ENCODE measurements at regions of chr21 and their contacts with region 1.

Region 1: GRCh38 chr21:23740463-23740862 is 1866.8 kb downstream of the MRPL39 start:
- DNase-seq: no peak
- H3K4me3 ChIP-seq: no peak overlapping the region
- H3K27ac ChIP-seq: no peak overlapping the region
- H3K4me1 ChIP-seq: no peaks in the 10 kb centered on the region
- H3K27me3 ChIP-seq: no peaks in the 10 kb centered on the region
- CTCF ChIP-seq: peak in 2 of 3 experiments; percentile 17 to 40; a peak in 2 of 4 replicates
- EP300 ChIP-seq: no peak
- POLR2A ChIP-seq: no peak
- RAD21 ChIP-seq: peak; percentile 32 to 39; a peak in 3 of 4 replicates

Region 2: GRCh38 chr21:23612210-23612609 is 128.3 kb before region 1 on chr21:
- CTCF ChIA-PET with region 1: no interaction called
- POLR2A ChIA-PET with region 1: no interaction called
- DNase-seq: no peak
- H3K4me3 ChIP-seq: no peak overlapping the region
- H3K27ac ChIP-seq: no peak overlapping the region
- H3K4me1 ChIP-seq: no peaks in the 10 kb centered on the region
- H3K27me3 ChIP-seq: no peaks in the 10 kb centered on the region
- CTCF ChIP-seq: no peak
- EP300 ChIP-seq: no peak
- POLR2A ChIP-seq: no peak
- RAD21 ChIP-seq: no peak

Region 3: GRCh38 chr21:23694390-23694789 is 46.1 kb before region 1 on chr21:
- CTCF ChIA-PET with region 1: no interaction called
- POLR2A ChIA-PET with region 1: no interaction called
- DNase-seq: no peak
- H3K4me3 ChIP-seq: no peak overlapping the region
- H3K27ac ChIP-seq: no peak overlapping the region
- H3K4me1 ChIP-seq: no peaks in the 10 kb centered on the region
- H3K27me3 ChIP-seq: no peaks in the 10 kb centered on the region
- CTCF ChIP-seq: no peak
- EP300 ChIP-seq: no peak
- POLR2A ChIP-seq: no peak
- RAD21 ChIP-seq: no peak; a peak in 1 of 4 replicates

Region 4: DNA sequence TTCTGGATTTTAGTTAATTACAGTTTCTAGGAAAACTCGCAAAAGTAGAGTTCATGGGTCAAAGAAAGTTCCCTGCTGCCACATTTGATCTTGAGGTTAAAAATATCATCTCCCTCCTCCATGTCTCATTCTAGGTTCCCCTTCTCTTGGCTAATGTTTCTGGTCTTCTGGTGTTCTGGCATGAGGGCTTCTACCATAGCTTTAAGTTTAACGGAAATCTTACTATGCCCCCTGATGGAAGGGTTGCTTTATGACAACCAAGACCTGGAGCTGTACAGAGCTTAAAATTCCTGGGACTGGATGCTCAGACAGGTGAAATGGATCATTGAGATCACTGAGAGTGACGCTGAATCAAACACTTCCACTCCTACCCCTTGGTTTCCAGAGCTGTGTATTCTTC is 14.9 kb before region 1 on chr21:
- CTCF ChIA-PET with region 1: interaction called, 14 read pairs
- POLR2A ChIA-PET with region 1: no interaction called
- DNase-seq: no peak
- H3K4me3 ChIP-seq: no peak overlapping the region
- H3K27ac ChIP-seq: no peak overlapping the region
- H3K4me1 ChIP-seq: no peaks in the 10 kb centered on the region
- H3K27me3 ChIP-seq: no peaks in the 10 kb centered on the region
- CTCF ChIP-seq: peak in 2 of 3 experiments; percentile 23 to 46; a peak in 2 of 4 replicates
- EP300 ChIP-seq: no peak
- POLR2A ChIP-seq: no peak
- RAD21 ChIP-seq: peak; percentile 61 to 76

Region 5: DNA sequence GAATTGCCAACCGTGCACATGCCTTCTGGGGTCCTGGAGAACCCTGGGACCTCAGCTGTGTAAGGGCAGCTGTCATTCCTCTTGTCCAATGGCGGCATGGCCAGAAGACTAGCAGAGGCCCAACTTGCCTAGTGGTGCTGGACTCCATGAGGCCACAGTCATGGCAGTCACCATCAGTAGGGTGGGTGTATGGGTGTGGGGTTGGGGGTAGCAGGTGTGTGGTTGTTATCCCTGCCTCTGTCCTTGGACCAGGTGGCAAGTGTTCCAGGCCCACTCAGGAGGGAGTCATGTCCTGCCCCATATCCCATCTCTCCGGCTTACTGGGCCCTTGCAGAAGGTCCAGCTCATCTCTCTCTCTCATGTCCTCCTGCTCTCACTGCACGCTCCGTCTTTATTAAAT is 270.6 kb after region 1 on chr21:
- CTCF ChIA-PET with region 1: no interaction called
- POLR2A ChIA-PET with region 1: no interaction called
- DNase-seq: no peak
- H3K4me3 ChIP-seq: no peak overlapping the region
- H3K27ac ChIP-seq: no peak overlapping the region
- H3K4me1 ChIP-seq: no peaks in the 10 kb centered on the region
- H3K27me3 ChIP-seq: no peaks in the 10 kb centered on the region
- CTCF ChIP-seq: no peak
- EP300 ChIP-seq: no peak
- POLR2A ChIP-seq: no peak
- RAD21 ChIP-seq: no peak